ENCODE measurements at regions of chr10 and their contacts with region 1.

Region 1: DNA sequence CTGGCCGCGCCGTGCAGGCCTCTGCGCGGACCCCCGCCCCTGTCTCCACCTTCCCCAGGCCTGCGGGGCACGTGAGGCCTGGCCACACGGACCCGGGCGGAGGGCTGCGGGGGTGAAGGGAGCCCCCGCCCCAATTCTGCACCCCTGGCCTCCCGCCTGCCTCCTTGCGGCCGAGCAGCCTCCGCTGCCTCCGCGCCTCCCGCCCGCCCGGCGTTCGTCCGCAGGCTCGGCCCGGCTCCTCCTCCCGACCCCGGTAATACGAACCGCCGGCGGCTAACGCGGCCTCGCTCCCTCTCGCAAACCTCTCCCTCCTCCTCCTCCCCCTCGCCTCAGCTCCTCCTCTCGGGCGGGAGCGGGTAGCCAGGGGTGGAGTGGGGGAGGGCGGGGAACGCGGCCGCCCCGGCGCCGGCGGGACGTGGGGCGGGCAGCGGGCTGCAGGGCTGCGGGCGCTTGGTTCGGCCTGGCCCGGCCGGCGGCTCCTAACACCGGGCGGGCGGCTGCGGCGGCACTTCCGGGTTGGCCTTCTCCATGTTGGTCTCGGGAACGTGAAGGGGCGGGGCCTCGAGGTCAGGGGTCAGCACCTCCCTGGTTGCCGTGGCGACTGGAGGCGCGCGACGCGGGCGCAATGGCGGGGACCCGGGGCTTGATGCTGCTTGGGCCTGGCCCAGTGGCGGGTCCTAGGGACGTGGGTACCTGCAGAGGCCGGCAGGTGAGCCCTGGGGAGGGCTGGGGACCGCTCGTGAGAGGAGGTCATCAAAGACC is at the start of gene RAB11FIP2:
- DNase-seq: peak; percentile 94 to 99 (median 97)

Region 2: DNA sequence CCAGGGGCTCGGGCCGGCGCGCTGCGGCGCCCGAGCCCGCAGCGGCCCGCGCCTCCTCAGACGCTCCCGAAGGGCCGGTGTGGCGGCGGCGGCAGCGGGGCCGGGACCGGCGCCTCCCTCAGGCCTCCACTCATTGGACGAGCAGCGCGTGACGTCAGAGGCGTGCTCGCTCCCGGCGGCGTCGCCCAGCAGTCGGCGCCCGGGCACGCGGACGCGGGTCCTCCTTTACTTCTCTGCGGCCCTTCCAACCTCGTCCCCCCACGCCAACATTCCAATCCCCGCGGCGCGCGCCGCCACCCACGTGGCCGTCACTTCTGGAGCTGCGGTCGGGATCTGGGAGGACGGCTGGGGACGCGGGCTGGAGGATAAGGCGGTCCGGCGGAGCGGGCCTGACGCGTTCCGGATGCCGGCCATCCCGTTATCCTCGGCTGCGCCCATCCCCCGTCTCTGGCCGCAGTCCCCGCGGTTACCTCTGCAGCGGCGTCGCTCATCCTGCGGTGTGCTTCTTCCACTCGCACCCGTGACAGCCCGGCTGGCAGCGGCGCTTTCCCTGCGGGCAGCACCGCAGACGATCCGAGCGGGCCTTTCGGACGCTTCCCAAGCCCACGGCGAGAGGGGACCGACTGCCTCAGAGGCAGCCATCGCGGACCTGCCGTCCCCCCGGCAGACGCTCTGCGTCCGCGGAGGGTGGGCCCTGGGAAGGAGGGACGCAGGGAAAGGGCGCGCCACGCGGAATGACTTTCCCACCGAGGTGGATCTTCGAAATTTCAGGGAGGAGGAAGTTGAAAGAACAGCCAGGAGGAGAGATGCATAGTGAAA is 671.0 kb before region 1 on chr10 and contains the start of gene PDZD8:
- intact Hi-C with region 1: loop called (anchors 10 kb)
- DNase-seq: peak; percentile 91 to 99 (median 93)

Region 3: GRCh38 chr10:117537436-117537903 is 509.1 kb before region 1 on chr10:
- intact Hi-C with region 1: loop called (anchors 10 kb)
- DNase-seq: peak in 1 of 10 donors; percentile 54

Region 4: GRCh38 chr10:118027397-118027796 is 19.2 kb before region 1 on chr10:
- intact Hi-C with region 1: loop called (anchors 2 kb)
- DNase-seq: peak in 5 of 10 donors; percentile 4 to 87 (median 49)

Region 5: DNA sequence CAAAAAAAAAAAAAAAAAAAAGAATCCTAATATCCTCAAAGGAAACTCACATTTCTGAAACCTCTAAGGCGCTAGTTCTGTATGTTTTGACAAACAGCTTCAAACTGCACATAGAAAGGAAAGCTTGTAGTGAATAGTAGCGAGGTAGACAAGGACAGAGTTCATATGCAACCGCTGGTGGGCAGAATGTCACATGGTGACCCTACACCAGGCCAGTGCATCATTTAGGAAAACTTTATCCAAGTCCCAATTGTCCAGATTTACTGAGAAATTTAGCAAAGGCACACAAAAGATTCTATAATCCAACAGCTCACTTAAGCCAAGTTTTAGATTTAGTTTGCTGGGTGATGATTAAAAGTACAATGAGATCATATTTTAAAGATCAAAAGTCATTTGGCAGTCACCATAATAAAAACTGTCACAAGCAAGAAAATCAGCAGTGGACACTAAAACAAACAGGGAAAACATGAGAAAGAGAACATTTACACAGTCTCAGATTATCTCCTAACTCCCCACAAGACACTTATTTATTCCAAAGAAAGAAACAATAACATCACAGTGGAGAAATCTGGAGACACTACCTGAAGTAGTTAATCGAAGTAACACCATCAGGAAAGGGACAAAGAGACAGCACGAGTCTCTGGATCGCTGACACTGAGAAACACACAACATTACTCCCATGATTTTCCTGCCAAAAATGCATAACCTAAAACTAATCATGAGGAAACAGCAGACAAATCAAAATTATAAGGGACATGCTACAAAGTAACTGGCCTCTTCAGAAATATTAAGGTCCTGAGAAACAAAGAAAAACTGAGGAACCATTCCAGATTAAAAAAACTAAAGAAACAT is 275.4 kb after region 1 on chr10:
- intact Hi-C with region 1: no loop called
- DNase-seq: no peak

Region 6: GRCh38 chr10:118341791-118342637 is 295.4 kb after region 1 on chr10 and contains the start of gene FAM204A:
- intact Hi-C with region 1: loop called (anchors 5 kb)
- DNase-seq: peak; percentile 86 to 99 (median 92)